CD8-positive, alpha-beta T cell (primary cell): ENCODE measurements at regions of chr7 and their contacts with region 1.

Region 1: DNA sequence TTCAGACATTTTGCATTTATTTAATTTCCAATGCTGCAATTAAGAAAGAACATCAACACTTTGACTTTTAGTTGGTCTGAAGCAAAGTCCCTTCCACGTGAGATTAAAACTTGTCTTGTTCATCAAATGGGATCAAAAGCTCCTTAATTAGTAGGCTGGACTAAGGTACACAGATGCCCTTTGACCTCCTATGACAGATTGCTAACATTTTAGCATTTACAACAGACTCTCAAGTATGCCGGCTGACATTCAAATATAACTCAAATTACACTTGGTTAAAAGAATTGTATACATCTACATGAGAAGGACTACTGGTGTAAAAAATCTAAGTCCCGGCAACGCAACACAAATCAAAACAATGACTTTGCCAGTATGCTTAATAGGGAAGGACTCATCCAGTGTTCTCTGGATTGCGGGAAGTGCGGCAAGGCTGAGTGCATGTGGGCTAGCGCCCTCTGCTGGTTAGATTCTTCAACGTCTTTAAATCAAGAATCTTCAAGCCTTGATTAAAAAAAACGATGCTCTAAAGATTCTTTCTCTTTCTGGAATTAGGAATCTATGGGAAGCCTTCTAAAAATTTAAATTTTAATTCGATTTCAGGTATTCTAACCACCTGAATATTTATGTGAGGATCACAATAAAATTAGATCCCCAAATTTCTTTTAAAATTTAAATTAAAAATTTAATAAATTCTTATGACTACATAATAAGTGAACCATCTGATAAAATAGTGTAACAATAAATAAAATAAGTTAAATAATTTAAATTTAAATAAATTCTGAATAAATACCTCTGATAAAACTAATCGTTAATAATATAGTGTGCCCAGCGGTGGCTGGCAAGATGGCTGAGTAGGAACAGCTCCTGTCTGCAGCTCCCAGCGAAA is 444.7 kb downstream of the DGKB start:
- DNase-seq: peak in 6 of 9 experiments; percentile 4 to 66 (median 42)
- ATAC-seq: no peak
- H3K4me3 ChIP-seq: no peak overlapping the region
- H3K4me3 Mint-ChIP-seq: no peak overlapping the region
- H3K27ac ChIP-seq: no peak overlapping the region
- H3K27ac Mint-ChIP-seq: no peak overlapping the region
- H3K4me1 ChIP-seq: no peaks in the 10 kb centered on the region
- H3K4me1 Mint-ChIP-seq: peaks cover 2% of the 10 kb centered on the region
- H3K27me3 ChIP-seq: no peaks in the 10 kb centered on the region
- H3K27me3 Mint-ChIP-seq: peaks cover 4% of the 10 kb centered on the region
- CTCF ChIP-seq: peak; percentile 76

Region 2: DNA sequence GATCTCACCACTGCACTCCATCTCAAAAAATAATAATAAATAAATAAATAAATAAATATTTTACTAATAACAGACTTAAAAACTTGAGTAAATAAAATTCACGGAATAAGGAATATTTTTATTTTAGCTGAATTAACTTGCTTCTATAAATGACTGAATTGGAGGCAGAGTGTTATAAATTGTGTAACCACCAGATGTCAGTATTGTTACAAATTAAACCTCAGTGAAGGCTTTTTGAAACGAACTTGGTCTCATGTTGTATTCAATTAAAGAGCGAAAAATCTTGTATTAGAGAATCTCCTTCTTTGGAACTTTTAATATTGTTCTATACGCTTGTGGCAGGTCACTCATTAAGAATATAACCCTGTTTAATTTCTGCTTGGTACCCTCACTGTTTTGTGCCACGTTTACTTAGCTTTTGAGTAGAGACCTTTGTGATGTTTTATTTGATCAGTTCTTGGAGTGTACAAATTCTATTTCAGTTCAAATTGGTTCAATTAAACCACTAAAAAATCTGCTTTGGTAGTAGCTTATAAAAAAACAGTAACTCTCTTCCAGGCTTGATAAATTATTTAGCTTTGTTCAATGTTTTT is 1932.9 kb before region 1 on chr7:
- CTCF ChIA-PET with region 1: no interaction called
- POLR2A ChIA-PET with region 1: no interaction called
- intact Hi-C with region 1: loop called in 1 of 2 experiments (anchors 10 kb)
- DNase-seq: peak in 2 of 9 experiments; percentile 41 to 49
- ATAC-seq: no peak
- H3K4me3 ChIP-seq: no peak overlapping the region
- H3K4me3 Mint-ChIP-seq: no peak overlapping the region
- H3K27ac ChIP-seq: no peak overlapping the region
- H3K27ac Mint-ChIP-seq: no peak overlapping the region
- H3K4me1 ChIP-seq: no peaks in the 10 kb centered on the region
- H3K4me1 Mint-ChIP-seq: no peaks in the 10 kb centered on the region
- H3K27me3 ChIP-seq: no peaks in the 10 kb centered on the region
- H3K27me3 Mint-ChIP-seq: peaks cover 23% of the 10 kb centered on the region
- CTCF ChIP-seq: peak; percentile 87

Region 3: DNA sequence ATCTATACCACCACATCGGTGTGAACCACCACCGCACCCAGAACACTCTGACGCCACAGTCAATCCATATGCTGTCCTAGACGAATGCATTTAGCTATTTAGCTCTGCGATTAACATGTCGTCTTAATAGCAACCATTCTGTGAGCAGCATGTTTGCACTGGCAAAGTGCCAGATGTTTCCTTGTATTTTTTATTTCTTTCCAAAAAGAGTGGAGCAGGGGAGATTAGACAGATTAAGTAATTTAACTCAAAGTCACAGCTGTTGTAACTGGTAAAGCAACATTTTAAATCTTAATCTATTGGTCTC is 1827.3 kb before region 1 on chr7:
- CTCF ChIA-PET with region 1: no interaction called
- POLR2A ChIA-PET with region 1: no interaction called
- intact Hi-C with region 1: loop called (anchors 5 kb)
- DNase-seq: no peak
- ATAC-seq: no peak
- H3K4me3 ChIP-seq: no peak overlapping the region
- H3K4me3 Mint-ChIP-seq: no peak overlapping the region
- H3K27ac ChIP-seq: no peak overlapping the region
- H3K27ac Mint-ChIP-seq: no peak overlapping the region
- H3K4me1 ChIP-seq: no peaks in the 10 kb centered on the region
- H3K4me1 Mint-ChIP-seq: no peaks in the 10 kb centered on the region
- H3K27me3 ChIP-seq: no peaks in the 10 kb centered on the region
- H3K27me3 Mint-ChIP-seq: peaks cover 13% of the 10 kb centered on the region
- CTCF ChIP-seq: no peak

Region 4: DNA sequence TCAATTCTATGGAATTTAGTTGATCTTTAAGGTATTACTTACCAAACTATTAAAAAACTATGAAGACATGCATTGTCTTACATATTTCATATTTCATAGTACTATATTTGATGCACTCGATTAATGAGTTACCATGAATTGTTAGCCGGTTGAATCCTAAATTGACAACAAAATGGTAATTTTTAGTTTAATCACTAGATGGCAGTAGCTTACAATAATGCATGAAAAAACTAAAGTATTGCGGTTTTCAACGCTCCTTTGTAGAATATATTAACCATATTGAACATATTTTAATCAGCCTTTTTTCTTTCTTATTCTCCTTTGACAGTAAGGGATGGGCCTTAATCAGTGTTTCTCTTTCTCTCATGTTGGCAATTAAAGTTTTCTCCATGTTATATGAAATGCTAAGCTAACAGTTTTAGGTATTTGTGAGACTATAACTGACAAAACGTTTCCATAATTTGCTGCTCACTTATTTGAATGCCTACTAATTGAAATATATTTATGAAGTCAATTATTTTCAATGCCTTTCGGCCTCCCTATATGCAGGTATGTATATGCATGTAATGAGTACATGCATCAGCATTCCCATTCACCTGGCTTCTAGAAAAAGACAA is 1818.9 kb before region 1 on chr7:
- CTCF ChIA-PET with region 1: no interaction called
- POLR2A ChIA-PET with region 1: no interaction called
- intact Hi-C with region 1: loop called (anchors 5 kb)
- DNase-seq: peak in 2 of 9 experiments; percentile 51 to 64
- ATAC-seq: peak; percentile 40
- H3K4me3 ChIP-seq: no peak overlapping the region
- H3K4me3 Mint-ChIP-seq: no peak overlapping the region
- H3K27ac ChIP-seq: no peak overlapping the region
- H3K27ac Mint-ChIP-seq: no peak overlapping the region
- H3K4me1 ChIP-seq: no peaks in the 10 kb centered on the region
- H3K4me1 Mint-ChIP-seq: peaks cover 16% of the 10 kb centered on the region
- H3K27me3 ChIP-seq: no peaks in the 10 kb centered on the region
- H3K27me3 Mint-ChIP-seq: peaks cover 2% of the 10 kb centered on the region
- CTCF ChIP-seq: peak; percentile 90

Region 5: GRCh38 chr7:12686894-12687717 is 1770.7 kb before region 1 on chr7 and contains the start of gene ARL4A:
- CTCF ChIA-PET with region 1: no interaction called
- POLR2A ChIA-PET with region 1: interaction called, 3 read pairs
- intact Hi-C with region 1: loop called in 1 of 2 experiments (anchors 5 kb)
- DNase-seq: peak; percentile 70 to 94 (median 87)
- ATAC-seq: peak; percentile 41
- H3K4me3 ChIP-seq: peak within 1 kb of the TSS; percentile 94
- H3K4me3 Mint-ChIP-seq: peak within 1 kb of the TSS; percentile 92
- H3K27ac ChIP-seq: peak within 1 kb of the TSS; percentile 97 to 99
- H3K27ac Mint-ChIP-seq: peak within 1 kb of the TSS; percentile 93
- H3K4me1 ChIP-seq: no peaks in the 10 kb centered on the region
- H3K4me1 Mint-ChIP-seq: peaks cover 27% of the 10 kb centered on the region
- H3K27me3 ChIP-seq: no peaks in the 10 kb centered on the region
- H3K27me3 Mint-ChIP-seq: no peaks in the 10 kb centered on the region
- CTCF ChIP-seq: peak; percentile 44
- total RNA-seq, gene ARL4A: 48.6 to 56.2 TPM

Region 6: GRCh38 chr7:13279854-13280435 is 1177.9 kb before region 1 on chr7:
- CTCF ChIA-PET with region 1: interaction called, 7 read pairs
- POLR2A ChIA-PET with region 1: no interaction called
- intact Hi-C with region 1: loop called in 1 of 2 experiments (anchors 2 kb)
- DNase-seq: peak in 2 of 9 experiments; percentile 23 to 37
- ATAC-seq: no peak
- H3K4me3 ChIP-seq: no peak overlapping the region
- H3K4me3 Mint-ChIP-seq: no peak overlapping the region
- H3K27ac ChIP-seq: no peak overlapping the region
- H3K27ac Mint-ChIP-seq: no peak overlapping the region
- H3K4me1 ChIP-seq: no peaks in the 10 kb centered on the region
- H3K4me1 Mint-ChIP-seq: no peaks in the 10 kb centered on the region
- H3K27me3 ChIP-seq: no peaks in the 10 kb centered on the region
- H3K27me3 Mint-ChIP-seq: peaks cover 8% of the 10 kb centered on the region
- CTCF ChIP-seq: peak; percentile 56

Region 7: GRCh38 chr7:13524076-13524475 is 933.7 kb before region 1 on chr7:
- CTCF ChIA-PET with region 1: interaction called, 4 read pairs
- POLR2A ChIA-PET with region 1: no interaction called
- intact Hi-C with region 1: loop called in 1 of 2 experiments (anchors 2 kb)
- DNase-seq: no peak
- ATAC-seq: no peak
- H3K4me3 ChIP-seq: no peak overlapping the region
- H3K4me3 Mint-ChIP-seq: no peak overlapping the region
- H3K27ac ChIP-seq: no peak overlapping the region
- H3K27ac Mint-ChIP-seq: no peak overlapping the region
- H3K4me1 ChIP-seq: no peaks in the 10 kb centered on the region
- H3K4me1 Mint-ChIP-seq: no peaks in the 10 kb centered on the region
- H3K27me3 ChIP-seq: no peaks in the 10 kb centered on the region
- H3K27me3 Mint-ChIP-seq: no peaks in the 10 kb centered on the region
- CTCF ChIP-seq: no peak

Region 8: DNA sequence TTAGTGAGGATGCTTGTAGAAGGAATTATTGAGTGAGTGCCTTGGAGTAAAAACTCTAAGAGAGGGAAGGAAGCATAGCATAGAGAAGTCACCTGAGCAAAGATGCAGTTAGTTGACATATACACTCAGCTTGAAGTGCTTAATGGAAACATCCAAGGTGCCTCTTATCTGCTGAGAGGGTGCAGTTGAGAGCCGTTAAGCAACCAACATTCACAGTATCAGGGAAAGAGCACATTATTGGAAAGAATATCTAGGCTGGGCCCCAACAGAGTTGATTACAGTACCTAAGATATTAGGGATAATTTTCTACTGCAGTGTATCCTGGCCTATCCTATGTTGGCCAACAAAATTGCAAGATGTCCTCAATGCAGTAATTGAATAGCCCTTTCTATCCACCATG is 770.3 kb before region 1 on chr7:
- CTCF ChIA-PET with region 1: no interaction called
- POLR2A ChIA-PET with region 1: no interaction called
- intact Hi-C with region 1: no loop called
- DNase-seq: no peak
- ATAC-seq: no peak
- H3K4me3 ChIP-seq: no peak overlapping the region
- H3K4me3 Mint-ChIP-seq: no peak overlapping the region
- H3K27ac ChIP-seq: no peak overlapping the region
- H3K27ac Mint-ChIP-seq: no peak overlapping the region
- H3K4me1 ChIP-seq: no peaks in the 10 kb centered on the region
- H3K4me1 Mint-ChIP-seq: no peaks in the 10 kb centered on the region
- H3K27me3 ChIP-seq: no peaks in the 10 kb centered on the region
- H3K27me3 Mint-ChIP-seq: no peaks in the 10 kb centered on the region
- CTCF ChIP-seq: no peak

Region 9: DNA sequence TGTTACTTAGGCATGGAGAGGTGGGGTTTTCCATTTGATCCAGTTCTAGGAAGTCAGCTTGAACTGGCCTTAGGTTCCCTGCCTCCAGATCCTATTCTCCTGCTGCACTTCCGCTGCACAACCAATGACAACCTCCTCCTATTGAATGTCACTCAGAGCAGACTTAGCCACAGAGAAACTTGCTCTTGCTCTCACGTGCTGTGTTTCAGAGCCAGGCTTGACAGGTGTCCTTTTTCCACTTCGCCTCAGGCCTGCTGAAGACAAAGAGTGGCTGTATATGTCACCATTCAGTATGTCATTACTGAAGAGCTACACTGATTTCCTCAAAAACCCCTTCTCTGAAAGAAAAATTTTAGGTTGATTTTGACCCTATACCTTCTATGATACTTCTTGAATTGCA is 352.9 kb before region 1 on chr7:
- CTCF ChIA-PET with region 1: no interaction called
- POLR2A ChIA-PET with region 1: no interaction called
- intact Hi-C with region 1: no loop called
- DNase-seq: no peak
- ATAC-seq: no peak
- H3K4me3 ChIP-seq: no peak overlapping the region
- H3K4me3 Mint-ChIP-seq: no peak overlapping the region
- H3K27ac ChIP-seq: no peak overlapping the region
- H3K27ac Mint-ChIP-seq: no peak overlapping the region
- H3K4me1 ChIP-seq: no peaks in the 10 kb centered on the region
- H3K4me1 Mint-ChIP-seq: no peaks in the 10 kb centered on the region
- H3K27me3 ChIP-seq: no peaks in the 10 kb centered on the region
- H3K27me3 Mint-ChIP-seq: no peaks in the 10 kb centered on the region
- CTCF ChIP-seq: no peak

Region 10: DNA sequence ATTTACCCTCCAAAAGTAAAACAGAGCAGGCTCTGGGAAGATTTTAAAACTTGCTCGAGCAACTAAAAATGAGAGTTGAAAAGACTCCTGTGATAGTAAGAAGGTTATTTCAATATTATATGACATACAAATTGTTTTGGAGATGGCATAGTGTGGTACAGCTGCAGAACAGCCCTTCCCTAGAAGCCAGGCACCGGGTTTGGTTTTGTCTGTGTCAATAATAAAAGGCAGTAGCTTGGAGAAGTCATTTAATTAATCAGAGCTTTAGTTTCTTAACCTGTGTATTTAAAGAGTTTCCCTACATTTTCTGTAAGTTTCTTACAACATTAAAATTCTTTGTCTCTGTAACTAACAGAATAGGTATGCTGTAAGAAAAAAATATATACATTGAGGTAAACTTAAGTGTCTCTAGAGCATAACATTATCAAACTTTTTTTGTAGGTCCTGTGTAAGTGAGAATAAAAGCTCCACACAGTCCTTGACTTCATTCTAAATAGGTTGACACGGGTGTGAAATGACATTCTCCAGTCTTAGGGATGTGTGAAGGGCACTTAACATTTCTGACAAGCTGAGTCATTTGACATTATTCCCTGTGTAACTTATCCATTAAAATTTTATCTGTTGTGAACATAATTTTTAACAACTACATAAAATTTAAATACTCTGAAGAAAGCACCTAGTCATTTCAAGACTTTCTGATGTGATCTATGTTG is 43.4 kb before region 1 on chr7:
- CTCF ChIA-PET with region 1: no interaction called
- POLR2A ChIA-PET with region 1: no interaction called
- intact Hi-C with region 1: no loop called
- DNase-seq: no peak
- ATAC-seq: no peak
- H3K4me3 ChIP-seq: no peak overlapping the region
- H3K4me3 Mint-ChIP-seq: no peak overlapping the region
- H3K27ac ChIP-seq: no peak overlapping the region
- H3K27ac Mint-ChIP-seq: no peak overlapping the region
- H3K4me1 ChIP-seq: no peaks in the 10 kb centered on the region
- H3K4me1 Mint-ChIP-seq: no peaks in the 10 kb centered on the region
- H3K27me3 ChIP-seq: no peaks in the 10 kb centered on the region
- H3K27me3 Mint-ChIP-seq: no peaks in the 10 kb centered on the region
- CTCF ChIP-seq: no peak

Region 11: GRCh38 chr7:14875941-14876587 is 418.3 kb after region 1 on chr7:
- CTCF ChIA-PET with region 1: no interaction called
- POLR2A ChIA-PET with region 1: no interaction called
- intact Hi-C with region 1: no loop called
- DNase-seq: no peak
- ATAC-seq: no peak
- H3K4me3 ChIP-seq: no peak overlapping the region
- H3K4me3 Mint-ChIP-seq: no peak overlapping the region
- H3K27ac ChIP-seq: no peak overlapping the region
- H3K27ac Mint-ChIP-seq: no peak overlapping the region
- H3K4me1 ChIP-seq: no peaks in the 10 kb centered on the region
- H3K4me1 Mint-ChIP-seq: no peaks in the 10 kb centered on the region
- H3K27me3 ChIP-seq: no peaks in the 10 kb centered on the region
- H3K27me3 Mint-ChIP-seq: no peaks in the 10 kb centered on the region
- CTCF ChIP-seq: no peak